Naive thymus-derived CD4-positive, alpha-beta T cell (primary cell): ENCODE measurements at regions of chr11 and their contacts with region 1.

Region 1: GRCh38 chr11:10455637-10456487 is 798 bp downstream of the AMPD3 start:
- DNase-seq: peak; percentile 45 to 85 (median 77)
- ATAC-seq: peak; percentile 71
- H3K4me3 ChIP-seq: peak overlapping the region; percentile 55
- H3K4me3 Mint-ChIP-seq: peak overlapping the region; percentile 78 to 96 (median 92)
- H3K27ac ChIP-seq: peak overlapping the region; percentile 75
- H3K27ac Mint-ChIP-seq: peak overlapping the region; percentile 87 to 98 (median 94)
- H3K4me1 ChIP-seq: peaks cover 62 to 67% of the 10 kb centered on the region in 2 donors
- H3K4me1 Mint-ChIP-seq: peaks cover 72 to 92% (median 90%) of the 10 kb centered on the region in 7 donors
- H3K27me3 ChIP-seq: no peaks in the 10 kb centered on the region
- H3K27me3 Mint-ChIP-seq: peaks cover 0 to 9% (median 0%) of the 10 kb centered on the region in 5 donors

Region 2: DNA sequence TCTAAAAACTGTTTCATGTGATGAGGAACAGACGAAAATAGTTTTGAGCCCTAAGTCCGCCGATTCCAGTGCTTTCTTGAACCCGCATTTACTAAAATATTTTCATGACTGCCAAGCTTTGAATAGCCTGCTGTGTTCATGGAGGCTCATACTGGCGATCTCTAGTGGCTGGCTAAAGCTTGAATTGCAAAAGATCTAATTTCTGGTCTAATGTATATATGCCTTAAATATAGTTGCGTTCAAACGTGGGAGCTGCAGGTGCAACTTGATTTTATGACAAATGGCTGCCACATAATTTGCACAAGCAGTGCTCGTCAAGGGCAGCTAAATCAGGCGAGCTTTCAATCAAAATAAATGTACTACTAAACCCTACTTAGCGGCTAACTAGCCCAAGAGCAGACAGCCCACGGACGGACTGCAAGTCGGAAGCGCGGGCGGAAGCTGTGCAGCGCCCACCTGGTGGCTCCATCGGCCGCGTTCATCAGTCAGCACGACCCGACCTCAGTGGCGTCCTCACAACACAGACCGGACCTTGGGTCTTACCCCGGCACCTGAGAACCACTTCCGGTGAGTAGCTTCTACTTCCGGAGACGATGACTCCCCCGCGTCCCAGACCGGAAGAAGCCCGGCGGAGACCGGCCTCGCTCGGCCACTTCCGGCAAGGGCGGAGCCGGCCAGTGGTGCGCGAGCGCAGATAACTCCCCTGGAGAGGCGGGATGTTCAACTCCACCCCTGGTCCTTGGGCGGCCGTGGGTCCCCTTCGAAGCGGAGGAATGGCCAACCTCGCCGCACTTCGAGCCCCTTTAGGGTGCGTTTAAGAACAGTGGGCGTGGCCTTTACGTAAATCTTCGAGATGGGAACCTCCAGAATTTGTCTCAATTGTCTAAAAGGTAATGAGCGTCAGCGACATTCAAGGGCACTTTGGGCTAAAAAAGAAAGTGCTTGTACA is 1767.2 kb before region 1 on chr11:
- CTCF ChIA-PET with region 1: no interaction called
- POLR2A ChIA-PET with region 1: no interaction called
- intact Hi-C with region 1: loop called (anchors 5 to 10 kb)
- DNase-seq: peak; percentile 50 to 86 (median 61)
- ATAC-seq: peak; percentile 92
- H3K4me3 ChIP-seq: peak overlapping the region; percentile 80
- H3K4me3 Mint-ChIP-seq: peak overlapping the region; percentile 89 to 99 (median 96)
- H3K27ac ChIP-seq: peak overlapping the region; percentile 85
- H3K27ac Mint-ChIP-seq: peak overlapping the region; percentile 90 to 99 (median 96)
- H3K4me1 ChIP-seq: peaks cover 15 to 17% of the 10 kb centered on the region in 2 donors
- H3K4me1 Mint-ChIP-seq: peaks cover 20 to 63% (median 45%) of the 10 kb centered on the region in 7 donors
- H3K27me3 ChIP-seq: no peaks in the 10 kb centered on the region
- H3K27me3 Mint-ChIP-seq: no peaks in the 10 kb centered on the region

Region 3: GRCh38 chr11:9757809-9758636 is 697.8 kb before region 1 on chr11:
- CTCF ChIA-PET with region 1: no interaction called
- POLR2A ChIA-PET with region 1: no interaction called
- intact Hi-C with region 1: loop called in 1 of 2 experiments (anchors 10 kb)
- DNase-seq: peak; percentile 79 to 97 (median 90)
- ATAC-seq: peak; percentile 94
- H3K4me3 ChIP-seq: peak overlapping the region; percentile 91
- H3K4me3 Mint-ChIP-seq: peak overlapping the region; percentile 77 to 86 (median 84)
- H3K27ac ChIP-seq: peak overlapping the region; percentile 73
- H3K27ac Mint-ChIP-seq: peak overlapping the region; percentile 34 to 91 (median 81)
- H3K4me1 ChIP-seq: peaks cover 7 to 9% of the 10 kb centered on the region in 2 donors
- H3K4me1 Mint-ChIP-seq: peaks cover 12 to 39% (median 18%) of the 10 kb centered on the region in 7 donors
- H3K27me3 ChIP-seq: no peaks in the 10 kb centered on the region
- H3K27me3 Mint-ChIP-seq: no peaks in the 10 kb centered on the region

Region 4: GRCh38 chr11:9861860-9862725 is 593.8 kb before region 1 on chr11:
- CTCF ChIA-PET with region 1: no interaction called
- POLR2A ChIA-PET with region 1: no interaction called
- intact Hi-C with region 1: no loop called
- DNase-seq: peak in 7 of 9 donors; percentile 5 to 37 (median 31)
- ATAC-seq: peak; percentile 85
- H3K4me3 ChIP-seq: no peak overlapping the region
- H3K4me3 Mint-ChIP-seq: no peak overlapping the region
- H3K27ac ChIP-seq: no peak overlapping the region
- H3K27ac Mint-ChIP-seq: no peak overlapping the region
- H3K4me1 ChIP-seq: peaks cover 0 to 9% of the 10 kb centered on the region in 2 donors
- H3K4me1 Mint-ChIP-seq: peaks cover 9 to 41% (median 27%) of the 10 kb centered on the region in 7 donors
- H3K27me3 ChIP-seq: no peaks in the 10 kb centered on the region
- H3K27me3 Mint-ChIP-seq: no peaks in the 10 kb centered on the region

Region 5: DNA sequence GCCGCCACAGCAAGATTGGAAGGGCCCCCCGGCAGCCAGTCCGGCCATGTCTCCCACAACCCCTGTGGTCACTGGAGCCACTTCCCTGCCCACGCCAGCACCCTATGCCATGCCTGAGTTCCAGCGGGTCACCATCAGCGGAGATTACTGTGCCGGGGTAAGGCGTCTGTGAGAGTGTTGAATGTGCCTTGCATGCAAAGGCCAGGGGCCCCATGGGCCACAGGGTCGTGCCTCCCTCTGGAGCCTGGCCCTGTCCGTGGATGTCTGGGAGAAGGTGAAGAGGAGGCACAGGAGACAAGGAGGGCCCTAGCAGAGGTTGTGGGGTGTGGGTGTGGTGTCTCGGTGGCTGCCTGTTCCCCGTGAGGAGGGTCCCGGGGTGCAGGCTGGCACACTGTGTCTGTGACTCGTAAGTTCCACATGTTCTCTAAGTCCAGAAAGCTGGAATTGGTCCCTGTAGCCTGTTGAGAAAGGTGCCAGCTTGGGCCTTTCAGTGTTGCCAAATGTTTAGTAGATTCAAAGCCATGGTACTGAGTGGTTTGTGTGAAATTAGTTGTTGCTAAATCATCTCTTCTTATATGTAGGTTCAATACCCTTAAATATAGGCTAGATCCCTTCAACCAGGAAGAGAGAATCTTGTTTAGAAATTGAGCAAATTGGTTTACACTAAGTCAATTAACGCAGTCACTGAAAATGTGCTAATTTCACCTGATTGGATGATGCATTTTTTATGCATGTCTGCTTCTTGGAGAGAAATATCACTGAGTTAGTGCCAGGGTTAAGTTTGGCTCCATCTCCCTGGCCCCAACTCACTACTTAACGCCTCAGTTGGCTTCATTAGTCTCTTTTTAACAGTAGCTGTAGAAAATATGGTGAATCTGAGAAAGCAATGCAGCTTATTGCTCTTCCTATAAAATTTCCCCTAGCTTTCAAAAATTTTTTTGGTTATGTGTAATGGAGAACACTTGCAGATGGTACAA is 23.0 kb after region 1 on chr11:
- CTCF ChIA-PET with region 1: no interaction called
- POLR2A ChIA-PET with region 1: interaction called, 3 read pairs
- intact Hi-C with region 1: loop called (anchors 2 kb)
- DNase-seq: no peak
- ATAC-seq: no peak
- H3K4me3 ChIP-seq: no peak overlapping the region
- H3K4me3 Mint-ChIP-seq: no peak overlapping the region
- H3K27ac ChIP-seq: no peak overlapping the region
- H3K27ac Mint-ChIP-seq: peak overlapping the region in 8 of 9 donors; percentile 23 to 67 (median 48)
- H3K4me1 ChIP-seq: no peaks in the 10 kb centered on the region
- H3K4me1 Mint-ChIP-seq: peaks cover 8 to 37% (median 18%) of the 10 kb centered on the region in 7 donors
- H3K27me3 ChIP-seq: no peaks in the 10 kb centered on the region
- H3K27me3 Mint-ChIP-seq: no peaks in the 10 kb centered on the region

Region 6: DNA sequence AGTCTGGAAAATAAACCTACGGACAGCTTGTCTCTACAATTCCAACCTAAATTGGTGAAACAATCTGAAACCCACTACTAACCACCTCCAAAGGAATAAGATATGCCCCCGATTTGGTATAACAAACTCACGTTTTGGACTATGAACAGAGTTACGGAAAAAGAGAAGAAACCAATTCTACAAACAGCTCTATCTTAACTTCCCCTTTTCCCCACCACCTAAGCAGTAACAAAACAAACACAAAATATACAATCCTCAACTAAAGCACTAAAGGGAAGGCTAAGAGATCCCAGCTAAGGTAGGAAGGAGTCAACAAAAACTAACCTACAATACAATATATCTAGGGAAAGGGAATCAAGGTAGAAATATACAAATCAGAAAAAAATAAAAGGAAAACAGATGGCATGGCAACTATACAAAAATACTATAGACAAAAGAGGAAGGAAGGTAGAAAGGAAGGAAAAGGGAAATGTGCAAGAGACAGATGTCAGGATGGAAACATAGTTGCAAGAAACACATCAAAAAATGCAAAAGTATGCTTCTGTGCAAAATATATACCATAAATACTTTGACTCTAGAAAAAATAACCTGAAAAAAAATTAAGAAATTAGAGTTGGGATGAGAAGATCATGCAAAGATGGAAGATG is 156.5 kb after region 1 on chr11:
- CTCF ChIA-PET with region 1: no interaction called
- POLR2A ChIA-PET with region 1: no interaction called
- intact Hi-C with region 1: no loop called
- DNase-seq: no peak
- ATAC-seq: peak; percentile 37
- H3K4me3 ChIP-seq: no peak overlapping the region
- H3K4me3 Mint-ChIP-seq: no peak overlapping the region
- H3K27ac ChIP-seq: no peak overlapping the region
- H3K27ac Mint-ChIP-seq: no peak overlapping the region
- H3K4me1 ChIP-seq: no peaks in the 10 kb centered on the region
- H3K4me1 Mint-ChIP-seq: no peaks in the 10 kb centered on the region
- H3K27me3 ChIP-seq: no peaks in the 10 kb centered on the region
- H3K27me3 Mint-ChIP-seq: peaks cover 22 to 57% (median 25%) of the 10 kb centered on the region in 5 donors

Region 7: GRCh38 chr11:10742471-10743208 is 286.8 kb after region 1 on chr11:
- CTCF ChIA-PET with region 1: no interaction called
- POLR2A ChIA-PET with region 1: no interaction called
- intact Hi-C with region 1: loop called in 1 of 2 experiments (anchors 5 kb)
- DNase-seq: peak in 1 of 9 donors; percentile 47
- ATAC-seq: peak; percentile 93
- H3K4me3 ChIP-seq: peak overlapping the region; percentile 18
- H3K4me3 Mint-ChIP-seq: peak overlapping the region in 9 of 10 donors; percentile 5 to 78 (median 69)
- H3K27ac ChIP-seq: no peak overlapping the region
- H3K27ac Mint-ChIP-seq: peak overlapping the region; percentile 7 to 89 (median 65)
- H3K4me1 ChIP-seq: peaks cover 26 to 35% of the 10 kb centered on the region in 2 donors
- H3K4me1 Mint-ChIP-seq: peaks cover 25 to 31% (median 28%) of the 10 kb centered on the region in 7 donors
- H3K27me3 ChIP-seq: no peaks in the 10 kb centered on the region
- H3K27me3 Mint-ChIP-seq: no peaks in the 10 kb centered on the region

Region 8: GRCh38 chr11:11157185-11157584 is 701.3 kb after region 1 on chr11:
- CTCF ChIA-PET with region 1: no interaction called
- POLR2A ChIA-PET with region 1: no interaction called
- intact Hi-C with region 1: loop called (anchors 10 kb)
- DNase-seq: peak in 8 of 9 donors; percentile 28 to 79 (median 72)
- ATAC-seq: peak; percentile 75
- H3K4me3 ChIP-seq: no peak overlapping the region
- H3K4me3 Mint-ChIP-seq: peak overlapping the region in 6 of 10 donors; percentile 75 to 92 (median 84)
- H3K27ac ChIP-seq: peak overlapping the region; percentile 72
- H3K27ac Mint-ChIP-seq: peak overlapping the region in 8 of 9 donors; percentile 86 to 99 (median 94)
- H3K4me1 ChIP-seq: peaks cover 11 to 28% of the 10 kb centered on the region in 2 donors
- H3K4me1 Mint-ChIP-seq: peaks cover 15 to 49% (median 44%) of the 10 kb centered on the region in 7 donors
- H3K27me3 ChIP-seq: no peaks in the 10 kb centered on the region
- H3K27me3 Mint-ChIP-seq: peaks cover 0 to 8% (median 0%) of the 10 kb centered on the region in 5 donors